WTC11 (cell line): ENCODE measurements at regions of chr22 and their contacts with region 1.

Region 1: GRCh38 chr22:31272522-31273446 is 19.5 kb downstream of the PIK3IP1 start:
- DNase-seq: peak; percentile 67
- ATAC-seq: peak; percentile 60
- H3K4me3 Mint-ChIP-seq: no peak overlapping the region
- H3K27ac Mint-ChIP-seq: peak overlapping the region; percentile 89
- H3K4me1 Mint-ChIP-seq: peaks cover 20% of the 10 kb centered on the region
- H3K27me3 Mint-ChIP-seq: no peaks in the 10 kb centered on the region
- CTCF ChIP-seq: peak; percentile 55

Region 2: DNA sequence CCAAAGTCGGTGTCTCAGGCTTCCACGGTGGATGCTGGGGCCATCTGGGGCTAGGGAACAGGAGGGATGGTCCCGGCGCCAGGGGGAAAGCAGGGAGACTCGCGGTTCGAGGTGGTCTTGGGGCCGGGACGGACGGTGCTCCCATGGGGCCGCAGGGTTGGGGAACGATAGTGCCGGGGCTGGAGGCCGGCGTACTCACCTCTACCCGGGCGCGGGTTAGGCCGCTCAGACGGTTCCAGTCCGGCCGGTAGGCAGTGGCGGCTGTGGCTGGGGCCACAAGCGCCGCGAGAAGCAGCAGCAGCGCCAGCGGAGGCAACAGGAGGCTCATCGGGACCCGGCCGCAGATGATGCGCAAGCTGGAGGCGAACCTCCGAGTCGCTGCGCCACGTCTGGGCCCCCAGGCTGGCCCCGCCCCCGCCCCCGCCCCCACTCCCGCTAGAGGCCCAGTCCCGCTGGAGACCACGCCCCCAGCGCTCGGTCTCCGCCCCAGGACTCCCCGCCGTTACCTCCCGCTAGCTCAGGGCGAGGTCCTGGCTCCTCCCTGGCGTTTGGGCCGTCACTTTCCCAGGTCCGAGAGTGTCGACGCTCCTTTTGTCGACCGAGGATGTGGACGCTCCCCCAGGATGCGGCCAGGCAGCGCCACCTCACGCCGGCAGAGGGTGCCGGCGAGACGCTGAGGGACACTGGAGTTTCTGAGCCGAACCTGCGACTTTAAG is 165.4 kb before region 1 on chr22 and contains the start of gene SELENOM:
- CTCF ChIA-PET with region 1: interaction called, 20 read pairs
- POLR2A ChIA-PET with region 1: no interaction called
- DNase-seq: peak; percentile 95
- ATAC-seq: peak; percentile 85
- H3K4me3 Mint-ChIP-seq: peak within 1 kb of the TSS; percentile 74
- H3K27ac Mint-ChIP-seq: peak within 1 kb of the TSS; percentile 19; the same call in 1 of the 2 replicates
- H3K4me1 Mint-ChIP-seq: peaks cover 18% of the 10 kb centered on the region
- H3K27me3 Mint-ChIP-seq: peaks cover 49% of the 10 kb centered on the region
- CTCF ChIP-seq: peak; percentile 46
- total RNA-seq, gene SELENOM: 16.3 to 24.6 TPM (median 22.6 TPM) in 3 replicates

Region 3: DNA sequence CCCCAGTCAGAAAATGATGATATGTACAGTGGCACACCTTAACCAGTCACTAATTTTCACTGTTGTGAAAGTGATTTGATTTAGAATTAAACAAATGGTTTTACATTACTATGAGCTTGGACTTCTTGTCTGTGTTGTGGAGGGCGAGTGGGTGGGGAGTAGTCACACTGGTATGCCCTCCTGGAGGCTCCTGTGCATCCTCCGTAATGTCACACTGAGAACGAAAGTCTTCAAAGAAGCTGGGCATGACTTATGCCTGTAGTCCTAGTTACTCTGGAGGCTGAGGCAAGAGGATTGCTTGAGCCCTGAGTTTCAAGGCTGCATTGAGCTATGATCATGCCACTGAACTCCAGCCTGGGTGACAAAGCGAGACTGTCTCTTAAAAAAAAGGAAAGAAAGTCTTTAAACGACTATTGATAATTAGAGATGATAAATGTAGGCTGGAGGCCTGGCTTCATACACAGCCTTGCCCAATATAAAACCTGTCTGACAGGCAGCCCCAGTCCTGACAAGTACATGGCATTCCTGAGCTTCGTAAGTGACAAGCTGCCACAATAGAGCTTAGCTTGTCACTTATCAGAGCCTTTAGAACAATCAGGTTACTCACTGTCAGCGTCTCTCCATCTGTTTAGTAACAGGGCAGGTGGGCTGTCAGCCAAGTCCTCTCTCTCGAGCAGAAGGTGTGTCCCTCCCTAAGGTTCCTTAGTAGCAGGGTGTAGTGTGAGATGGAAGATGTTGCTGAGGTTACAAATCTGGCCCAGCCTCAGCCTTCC is 65.7 kb before region 1 on chr22:
- CTCF ChIA-PET with region 1: interaction called, 123 read pairs
- POLR2A ChIA-PET with region 1: no interaction called
- DNase-seq: no peak
- ATAC-seq: no peak
- H3K4me3 Mint-ChIP-seq: no peak overlapping the region
- H3K27ac Mint-ChIP-seq: peak overlapping the region; percentile 46
- H3K4me1 Mint-ChIP-seq: peaks cover 14% of the 10 kb centered on the region
- H3K27me3 Mint-ChIP-seq: no peaks in the 10 kb centered on the region
- CTCF ChIP-seq: no peak

Region 4: GRCh38 chr22:31223786-31224191 is 49.0 kb before region 1 on chr22:
- CTCF ChIA-PET with region 1: interaction called, 25 read pairs
- POLR2A ChIA-PET with region 1: no interaction called
- DNase-seq: no peak
- ATAC-seq: no peak
- H3K4me3 Mint-ChIP-seq: no peak overlapping the region
- H3K27ac Mint-ChIP-seq: no peak overlapping the region
- H3K4me1 Mint-ChIP-seq: peaks cover 4% of the 10 kb centered on the region
- H3K27me3 Mint-ChIP-seq: no peaks in the 10 kb centered on the region
- CTCF ChIP-seq: no peak

Region 5: GRCh38 chr22:31253949-31254348 is 18.8 kb before region 1 on chr22:
- CTCF ChIA-PET with region 1: interaction called, 53 read pairs
- POLR2A ChIA-PET with region 1: no interaction called
- DNase-seq: peak; percentile 42
- ATAC-seq: peak; percentile 89
- H3K4me3 Mint-ChIP-seq: no peak overlapping the region
- H3K27ac Mint-ChIP-seq: peak overlapping the region; percentile 70; the same call in 1 of the 2 replicates
- H3K4me1 Mint-ChIP-seq: peaks cover 20% of the 10 kb centered on the region
- H3K27me3 Mint-ChIP-seq: no peaks in the 10 kb centered on the region
- CTCF ChIP-seq: no peak

Region 6: DNA sequence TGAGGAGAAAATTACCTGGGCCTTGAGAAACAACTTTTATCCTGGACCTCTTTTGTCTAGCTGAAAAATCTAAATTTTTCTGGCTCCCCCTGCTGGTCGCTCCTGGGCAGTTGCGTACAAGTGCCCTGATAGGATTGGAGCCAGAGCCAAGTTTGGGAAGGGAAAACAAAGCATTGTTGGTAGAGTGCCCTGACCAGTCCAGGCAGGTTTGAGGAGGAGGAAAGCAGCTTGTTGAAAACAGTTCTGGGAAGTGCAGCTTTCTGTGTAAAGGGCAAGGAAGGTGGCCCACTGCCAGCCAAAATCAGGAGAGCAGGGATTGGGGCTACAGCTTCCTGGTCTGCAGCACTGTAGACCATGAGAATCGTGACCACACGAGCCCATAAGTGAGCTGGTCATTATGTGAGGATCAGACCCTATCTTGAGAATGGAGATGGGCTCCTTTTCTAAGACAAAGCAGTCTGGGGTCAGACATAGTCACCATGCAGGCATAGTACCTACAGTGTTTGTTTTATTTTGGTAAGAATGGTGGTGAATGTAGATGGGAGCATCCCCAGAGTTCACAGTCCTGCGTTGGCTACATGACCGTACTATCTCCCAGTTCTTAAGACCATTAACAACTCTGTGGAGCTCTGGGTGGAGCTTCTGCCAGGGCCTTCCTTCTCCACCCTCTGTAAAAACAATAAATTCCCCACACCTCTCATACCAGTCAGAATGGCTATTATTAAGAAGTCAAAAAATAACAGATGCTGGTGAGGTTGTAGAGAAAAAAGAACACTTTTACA is 40.8 kb after region 1 on chr22:
- CTCF ChIA-PET with region 1: interaction called, 29 read pairs
- POLR2A ChIA-PET with region 1: no interaction called
- DNase-seq: peak; percentile 80
- ATAC-seq: peak; percentile 99
- H3K4me3 Mint-ChIP-seq: no peak overlapping the region
- H3K27ac Mint-ChIP-seq: peak overlapping the region; percentile 77
- H3K4me1 Mint-ChIP-seq: peaks cover 5% of the 10 kb centered on the region
- H3K27me3 Mint-ChIP-seq: peaks cover 3% of the 10 kb centered on the region
- CTCF ChIP-seq: peak; percentile 74

Region 7: DNA sequence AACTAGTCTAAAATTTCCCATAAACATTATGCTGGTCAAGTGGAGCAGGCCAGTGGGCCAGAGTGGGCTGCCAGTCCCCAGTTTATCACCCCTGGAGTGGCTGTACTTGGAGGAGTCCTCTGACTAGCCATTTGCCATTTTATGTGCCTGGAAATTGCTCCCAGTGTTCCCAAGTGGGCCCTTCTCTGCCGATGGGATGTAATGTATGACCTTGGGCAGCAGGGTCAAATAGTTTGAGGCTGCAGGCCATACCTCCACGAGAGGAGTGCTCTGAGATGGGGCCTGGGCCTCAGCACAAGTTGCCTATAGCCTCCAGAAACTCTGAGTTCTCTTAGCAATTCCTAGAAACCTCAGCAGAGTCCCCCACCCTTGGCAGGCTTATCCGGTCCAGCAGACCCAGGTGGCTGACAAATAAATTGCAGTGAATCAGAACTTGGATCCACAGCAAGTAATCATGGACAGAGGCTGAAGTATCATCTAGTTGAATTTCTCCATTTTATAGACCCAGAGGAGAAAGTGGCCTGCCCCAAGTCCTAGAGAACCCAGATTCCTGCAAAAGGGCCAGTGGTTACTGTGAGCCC is 91.2 kb after region 1 on chr22:
- CTCF ChIA-PET with region 1: no interaction called
- POLR2A ChIA-PET with region 1: no interaction called
- DNase-seq: no peak
- ATAC-seq: no peak
- H3K4me3 Mint-ChIP-seq: no peak overlapping the region
- H3K27ac Mint-ChIP-seq: no peak overlapping the region
- H3K4me1 Mint-ChIP-seq: peaks cover 15% of the 10 kb centered on the region
- H3K27me3 Mint-ChIP-seq: no peaks in the 10 kb centered on the region
- CTCF ChIP-seq: no peak